ENCODE measurements at regions of chr11 and their contacts with region 1.

Region 1: GRCh38 chr11:25272214-25272613 is 775.4 kb downstream of the LUZP2 start:
- DNase-seq: no peak
- ATAC-seq: no peak
- H3K4me3 ChIP-seq: no peak overlapping the region
- H3K4me3 Mint-ChIP-seq: no peak overlapping the region
- H3K27ac ChIP-seq: no peak overlapping the region
- H3K27ac Mint-ChIP-seq: no peak overlapping the region
- H3K4me1 ChIP-seq: no peaks in the 10 kb centered on the region
- H3K4me1 Mint-ChIP-seq: no peaks in the 10 kb centered on the region
- H3K27me3 ChIP-seq: no peaks in the 10 kb centered on the region
- H3K27me3 Mint-ChIP-seq: no peaks in the 10 kb centered on the region

Region 2: GRCh38 chr11:24226600-24226999 is 1045.6 kb before region 1 on chr11:
- CTCF ChIA-PET with region 1: no interaction called
- POLR2A ChIA-PET with region 1: no interaction called
- intact Hi-C with region 1: no loop called
- DNase-seq: no peak
- ATAC-seq: no peak
- H3K4me3 ChIP-seq: no peak overlapping the region
- H3K4me3 Mint-ChIP-seq: no peak overlapping the region
- H3K27ac ChIP-seq: no peak overlapping the region
- H3K27ac Mint-ChIP-seq: no peak overlapping the region
- H3K4me1 ChIP-seq: no peaks in the 10 kb centered on the region
- H3K4me1 Mint-ChIP-seq: no peaks in the 10 kb centered on the region
- H3K27me3 ChIP-seq: no peaks in the 10 kb centered on the region
- H3K27me3 Mint-ChIP-seq: no peaks in the 10 kb centered on the region

Region 3: DNA sequence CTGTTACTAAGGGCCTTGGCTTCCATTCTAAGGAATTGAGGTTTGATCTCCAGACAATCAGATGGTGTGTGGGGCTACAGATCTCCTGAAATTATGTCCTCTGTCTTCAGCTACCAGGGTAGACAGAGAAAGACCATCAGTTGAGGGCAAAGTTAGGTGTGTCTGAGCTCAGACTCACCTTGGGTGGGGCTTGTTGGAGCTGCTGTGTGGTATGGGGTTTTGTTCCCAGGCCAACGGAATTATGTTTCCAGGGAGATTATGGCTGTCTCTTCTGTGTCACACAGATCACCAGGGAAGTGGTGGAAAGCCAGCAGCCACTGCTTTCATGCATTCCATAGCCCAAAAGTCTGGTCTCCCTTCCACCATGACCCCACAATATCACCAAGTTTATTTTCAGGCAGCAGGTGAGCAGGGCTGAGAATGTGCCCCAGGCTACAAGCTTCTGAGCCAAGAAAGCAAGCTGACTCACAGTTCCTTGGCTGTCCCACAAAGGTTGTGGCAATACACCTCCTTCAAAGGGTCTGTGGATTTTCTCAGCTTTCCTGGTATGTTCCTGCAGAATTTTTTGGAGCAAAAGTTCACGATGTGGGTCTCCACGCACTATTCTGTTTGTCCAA is 60.5 kb before region 1 on chr11:
- CTCF ChIA-PET with region 1: no interaction called
- POLR2A ChIA-PET with region 1: no interaction called
- intact Hi-C with region 1: loop called in 1 of 2 experiments (anchors 10 kb)
- DNase-seq: no peak
- ATAC-seq: no peak
- H3K4me3 ChIP-seq: no peak overlapping the region
- H3K4me3 Mint-ChIP-seq: no peak overlapping the region
- H3K27ac ChIP-seq: no peak overlapping the region
- H3K27ac Mint-ChIP-seq: no peak overlapping the region
- H3K4me1 ChIP-seq: no peaks in the 10 kb centered on the region
- H3K4me1 Mint-ChIP-seq: no peaks in the 10 kb centered on the region
- H3K27me3 ChIP-seq: no peaks in the 10 kb centered on the region
- H3K27me3 Mint-ChIP-seq: no peaks in the 10 kb centered on the region

Region 4: DNA sequence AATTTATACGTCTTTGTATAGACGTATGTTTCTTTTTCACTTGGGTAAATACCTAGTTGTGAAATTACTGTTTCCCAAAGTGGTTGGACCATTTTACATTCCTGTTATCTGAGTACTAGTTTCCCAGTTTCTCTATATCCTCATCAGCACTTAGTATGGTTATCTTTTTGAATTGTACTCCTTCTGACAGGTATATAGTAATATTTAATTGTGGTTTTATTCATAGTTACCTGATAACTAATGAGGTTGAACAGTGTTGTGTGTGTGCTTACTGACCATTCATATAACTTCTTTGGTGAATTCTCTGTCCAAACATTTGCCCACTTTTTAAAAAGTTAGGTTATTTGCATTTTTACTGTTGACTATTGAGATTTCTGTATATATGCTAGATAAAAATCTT is 147.1 kb after region 1 on chr11:
- CTCF ChIA-PET with region 1: no interaction called
- POLR2A ChIA-PET with region 1: no interaction called
- intact Hi-C with region 1: no loop called
- DNase-seq: no peak
- ATAC-seq: no peak
- H3K4me3 ChIP-seq: no peak overlapping the region
- H3K4me3 Mint-ChIP-seq: no peak overlapping the region
- H3K27ac ChIP-seq: no peak overlapping the region
- H3K27ac Mint-ChIP-seq: no peak overlapping the region
- H3K4me1 ChIP-seq: no peaks in the 10 kb centered on the region
- H3K4me1 Mint-ChIP-seq: no peaks in the 10 kb centered on the region
- H3K27me3 ChIP-seq: no peaks in the 10 kb centered on the region
- H3K27me3 Mint-ChIP-seq: no peaks in the 10 kb centered on the region